ENCODE measurements at regions of chr10 and their contacts with region 1.

Region 1: GRCh38 chr10:13371897-13372470 is 23.9 kb upstream of the SEPHS1 start:
- DNase-seq: peak; percentile 85
- H3K4me3 Mint-ChIP-seq: no peak overlapping the region
- H3K27ac Mint-ChIP-seq: no peak overlapping the region
- H3K4me1 Mint-ChIP-seq: no peaks in the 10 kb centered on the region
- H3K27me3 Mint-ChIP-seq: no peaks in the 10 kb centered on the region

Region 2: DNA sequence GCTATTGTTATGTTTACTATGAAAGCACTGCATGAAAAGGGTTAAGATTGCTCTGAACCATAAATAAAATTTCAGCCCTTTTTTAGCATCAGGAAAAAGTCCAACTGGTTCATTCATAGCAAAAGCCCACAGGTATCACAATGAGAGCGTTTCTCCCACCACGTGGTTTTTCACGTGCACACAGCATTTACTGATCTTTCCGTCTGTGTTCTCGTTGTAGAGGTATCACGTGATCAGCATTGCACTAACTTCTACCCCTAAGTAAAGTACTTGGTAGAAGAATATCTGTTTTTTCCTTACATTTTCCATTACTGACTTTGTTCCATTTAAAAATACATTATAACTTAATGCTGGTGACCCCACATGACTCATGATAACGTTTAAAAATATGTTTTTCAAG is 352.7 kb before region 1 on chr10:
- CTCF ChIA-PET with region 1: no interaction called
- intact Hi-C with region 1: no loop called
- DNase-seq: no peak
- H3K4me3 Mint-ChIP-seq: no peak overlapping the region
- H3K27ac Mint-ChIP-seq: no peak overlapping the region
- H3K4me1 Mint-ChIP-seq: no peaks in the 10 kb centered on the region
- H3K27me3 Mint-ChIP-seq: peaks cover 8% of the 10 kb centered on the region

Region 3: GRCh38 chr10:13049774-13050420 is 322.1 kb before region 1 on chr10:
- CTCF ChIA-PET with region 1: no interaction called
- intact Hi-C with region 1: no loop called
- DNase-seq: no peak
- H3K4me3 Mint-ChIP-seq: no peak overlapping the region
- H3K27ac Mint-ChIP-seq: no peak overlapping the region
- H3K4me1 Mint-ChIP-seq: no peaks in the 10 kb centered on the region
- H3K27me3 Mint-ChIP-seq: no peaks in the 10 kb centered on the region

Region 4: GRCh38 chr10:13382703-13383398 is 10.9 kb after region 1 on chr10:
- CTCF ChIA-PET with region 1: interaction called, 22 read pairs
- intact Hi-C with region 1: no loop called
- DNase-seq: peak; percentile 4
- H3K4me3 Mint-ChIP-seq: peak overlapping the region; percentile 50
- H3K27ac Mint-ChIP-seq: no peak overlapping the region
- H3K4me1 Mint-ChIP-seq: peaks cover 11% of the 10 kb centered on the region
- H3K27me3 Mint-ChIP-seq: peaks cover 43% of the 10 kb centered on the region

Region 5: DNA sequence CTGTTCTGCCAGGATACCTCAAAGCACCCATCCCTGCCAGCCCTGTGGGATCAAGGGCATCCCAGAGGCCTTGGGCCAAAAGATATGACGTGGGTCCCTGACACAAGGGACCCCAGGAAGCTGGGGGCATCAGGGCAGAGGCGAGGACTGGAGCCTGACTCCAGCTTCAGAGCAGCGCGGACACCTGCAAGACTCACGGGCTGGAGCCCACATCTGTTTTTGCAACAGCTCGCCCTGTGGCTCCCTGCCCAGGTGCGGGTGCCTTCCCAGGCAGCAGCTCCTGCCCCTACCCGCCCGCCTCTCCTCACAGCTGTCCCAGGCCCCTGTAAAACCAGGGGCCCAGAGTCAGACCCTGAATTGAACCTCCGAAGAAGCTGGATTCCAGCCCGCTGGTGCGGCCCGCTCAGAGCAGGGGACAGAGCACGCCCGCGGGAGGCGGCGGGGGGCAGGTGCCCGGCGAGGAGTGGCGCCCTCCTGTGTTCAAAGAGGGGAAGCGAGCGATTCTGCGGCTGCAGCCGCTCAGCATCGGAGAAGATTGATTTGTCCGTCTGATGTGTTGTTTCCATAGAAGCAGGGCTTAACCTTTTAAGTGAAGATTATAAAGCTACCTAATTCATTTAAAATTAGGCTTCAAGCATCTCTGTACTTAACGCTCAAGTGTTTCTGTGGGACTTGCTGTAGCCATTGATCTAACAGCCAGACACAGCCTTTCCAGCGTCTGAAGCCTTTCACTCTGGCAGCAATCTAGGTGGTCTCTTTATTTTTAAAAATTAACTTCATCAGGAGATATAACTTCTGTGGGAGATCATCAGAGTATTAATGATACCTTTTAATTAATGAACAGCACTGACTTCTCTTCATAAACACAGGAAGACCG is 68.4 kb after region 1 on chr10:
- CTCF ChIA-PET with region 1: interaction called, 100 read pairs
- intact Hi-C with region 1: loop called (anchors 1 kb)
- DNase-seq: peak; percentile 75
- H3K4me3 Mint-ChIP-seq: peak overlapping the region; percentile 61
- H3K27ac Mint-ChIP-seq: no peak overlapping the region
- H3K4me1 Mint-ChIP-seq: peaks cover 7% of the 10 kb centered on the region
- H3K27me3 Mint-ChIP-seq: peaks cover 38% of the 10 kb centered on the region

Region 6: DNA sequence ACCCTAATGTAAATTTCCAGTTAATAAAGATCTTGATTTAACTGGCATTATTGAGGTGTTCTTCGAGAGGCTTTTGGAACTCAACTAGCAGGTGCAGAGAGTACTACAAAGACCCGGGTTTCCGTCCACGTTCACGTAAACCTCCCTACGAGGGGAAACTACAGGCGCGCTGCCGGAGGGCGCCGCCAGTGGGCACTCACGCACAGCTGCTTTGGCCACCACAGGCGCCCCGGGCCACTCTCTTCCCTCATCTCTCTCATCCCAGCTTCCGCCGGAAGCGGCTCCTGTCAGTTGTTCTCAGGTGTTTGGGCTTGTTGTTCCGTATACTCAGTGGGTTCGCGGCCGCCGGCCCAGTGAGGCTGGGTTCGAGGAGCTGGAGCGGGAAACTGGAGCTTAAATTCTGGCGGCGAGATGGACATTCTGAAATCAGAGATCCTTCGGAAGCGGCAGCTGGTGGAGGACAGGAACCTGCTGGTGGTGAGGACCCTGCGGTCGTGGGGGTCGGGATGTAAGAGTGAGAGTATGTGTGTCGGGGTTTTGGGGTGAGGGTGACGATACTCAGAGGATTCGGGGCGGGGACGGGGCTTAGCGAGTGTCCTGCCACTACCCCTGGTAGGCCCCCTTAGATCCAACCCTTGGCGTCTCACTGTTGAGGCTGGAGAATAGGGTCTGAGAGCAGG is 214.8 kb after region 1 on chr10 and contains the start of gene PRPF18:
- CTCF ChIA-PET with region 1: interaction called, 3 read pairs
- intact Hi-C with region 1: loop called (anchors 1 kb)
- DNase-seq: peak; percentile 96
- H3K4me3 Mint-ChIP-seq: peak within 1 kb of the TSS; percentile 99
- H3K27ac Mint-ChIP-seq: peak within 1 kb of the TSS; percentile 87
- H3K4me1 Mint-ChIP-seq: peaks cover 27% of the 10 kb centered on the region
- H3K27me3 Mint-ChIP-seq: peaks cover 2% of the 10 kb centered on the region
- total RNA-seq, gene PRPF18: 20.2 to 20.8 TPM

Region 7: DNA sequence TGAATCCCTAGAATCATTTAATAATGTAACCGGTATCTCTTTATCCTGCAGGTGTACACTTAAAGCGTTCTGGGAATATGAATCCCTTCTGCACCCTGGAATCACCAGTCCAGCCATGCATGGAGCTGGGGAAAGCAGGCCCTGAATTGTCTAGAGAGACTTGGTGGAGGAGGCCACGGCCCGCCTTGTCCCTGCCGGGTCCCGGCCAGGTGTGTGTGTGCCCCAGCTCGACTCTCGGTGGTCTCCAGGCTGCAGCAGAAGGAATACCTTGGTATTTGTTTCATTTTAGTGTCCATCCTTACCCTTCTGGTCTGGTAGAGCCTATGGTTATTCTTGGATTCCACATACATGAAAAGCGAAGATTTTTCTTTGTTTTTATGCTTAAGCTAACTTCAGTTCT is 272.9 kb after region 1 on chr10:
- CTCF ChIA-PET with region 1: no interaction called
- intact Hi-C with region 1: no loop called
- DNase-seq: no peak
- H3K4me3 Mint-ChIP-seq: no peak overlapping the region
- H3K27ac Mint-ChIP-seq: no peak overlapping the region
- H3K4me1 Mint-ChIP-seq: peaks cover 8% of the 10 kb centered on the region
- H3K27me3 Mint-ChIP-seq: no peaks in the 10 kb centered on the region

Region 8: GRCh38 chr10:13776861-13777311 is 404.9 kb after region 1 on chr10:
- CTCF ChIA-PET with region 1: interaction called, 3 read pairs
- intact Hi-C with region 1: loop called (anchors 1 kb)
- DNase-seq: no peak
- H3K4me3 Mint-ChIP-seq: no peak overlapping the region
- H3K27ac Mint-ChIP-seq: no peak overlapping the region
- H3K4me1 Mint-ChIP-seq: no peaks in the 10 kb centered on the region
- H3K27me3 Mint-ChIP-seq: no peaks in the 10 kb centered on the region